ENCODE measurements at regions of chr11 and their contacts with region 1.

Region 1: GRCh38 chr11:78061088-78061921 is 2.4 kb upstream of the THRSP start:
- DNase-seq: peak; percentile 64
- ATAC-seq: peak; percentile 78
- H3K4me3 ChIP-seq: peak overlapping the region; percentile 2 to 48 (median 36); a peak in 4 of 6 replicates
- H3K27ac ChIP-seq: peak overlapping the region; percentile 87
- H3K4me1 ChIP-seq: peaks cover 53% of the 10 kb centered on the region
- H3K27me3 ChIP-seq: no peaks in the 10 kb centered on the region
- CTCF ChIP-seq: no peak
- EP300 ChIP-seq: peak in 1 of 2 experiments; percentile 28; a peak in 1 of 4 replicates
- POLR2A ChIP-seq: no peak
- RAD21 ChIP-seq: no peak

Region 2: GRCh38 chr11:78050964-78051831 is 10.1 kb before region 1 on chr11:
- CTCF ChIA-PET with region 1: no interaction called
- POLR2A ChIA-PET with region 1: interaction called, 23 read pairs
- in situ Hi-C with region 1: no loop called
- intact Hi-C with region 1: no loop called
- DNase-seq: peak; percentile 65
- ATAC-seq: peak; percentile 41
- H3K4me3 ChIP-seq: peak overlapping the region in 2 of 3 experiments; percentile 7 to 46; a peak in 2 of 6 replicates
- H3K27ac ChIP-seq: peak overlapping the region; percentile 78
- H3K4me1 ChIP-seq: peaks cover 70% of the 10 kb centered on the region
- H3K27me3 ChIP-seq: no peaks in the 10 kb centered on the region
- CTCF ChIP-seq: no peak
- EP300 ChIP-seq: peak in 1 of 2 experiments; percentile 60; a peak in 1 of 4 replicates
- POLR2A ChIP-seq: peak in 1 of 2 experiments; percentile 68; a peak in 2 of 4 replicates
- RAD21 ChIP-seq: no peak

Region 3: GRCh38 chr11:78085972-78086371 is 24.7 kb after region 1 on chr11:
- CTCF ChIA-PET with region 1: no interaction called
- POLR2A ChIA-PET with region 1: interaction called, 5 read pairs
- in situ Hi-C with region 1: no loop called
- intact Hi-C with region 1: loop called (anchors 1 kb)
- DNase-seq: peak; percentile 34
- ATAC-seq: no peak
- H3K4me3 ChIP-seq: no peak overlapping the region
- H3K27ac ChIP-seq: peak overlapping the region; percentile 73
- H3K4me1 ChIP-seq: peaks cover 68% of the 10 kb centered on the region
- H3K27me3 ChIP-seq: no peaks in the 10 kb centered on the region
- CTCF ChIP-seq: no peak
- EP300 ChIP-seq: no peak
- POLR2A ChIP-seq: no peak
- RAD21 ChIP-seq: no peak

Region 4: DNA sequence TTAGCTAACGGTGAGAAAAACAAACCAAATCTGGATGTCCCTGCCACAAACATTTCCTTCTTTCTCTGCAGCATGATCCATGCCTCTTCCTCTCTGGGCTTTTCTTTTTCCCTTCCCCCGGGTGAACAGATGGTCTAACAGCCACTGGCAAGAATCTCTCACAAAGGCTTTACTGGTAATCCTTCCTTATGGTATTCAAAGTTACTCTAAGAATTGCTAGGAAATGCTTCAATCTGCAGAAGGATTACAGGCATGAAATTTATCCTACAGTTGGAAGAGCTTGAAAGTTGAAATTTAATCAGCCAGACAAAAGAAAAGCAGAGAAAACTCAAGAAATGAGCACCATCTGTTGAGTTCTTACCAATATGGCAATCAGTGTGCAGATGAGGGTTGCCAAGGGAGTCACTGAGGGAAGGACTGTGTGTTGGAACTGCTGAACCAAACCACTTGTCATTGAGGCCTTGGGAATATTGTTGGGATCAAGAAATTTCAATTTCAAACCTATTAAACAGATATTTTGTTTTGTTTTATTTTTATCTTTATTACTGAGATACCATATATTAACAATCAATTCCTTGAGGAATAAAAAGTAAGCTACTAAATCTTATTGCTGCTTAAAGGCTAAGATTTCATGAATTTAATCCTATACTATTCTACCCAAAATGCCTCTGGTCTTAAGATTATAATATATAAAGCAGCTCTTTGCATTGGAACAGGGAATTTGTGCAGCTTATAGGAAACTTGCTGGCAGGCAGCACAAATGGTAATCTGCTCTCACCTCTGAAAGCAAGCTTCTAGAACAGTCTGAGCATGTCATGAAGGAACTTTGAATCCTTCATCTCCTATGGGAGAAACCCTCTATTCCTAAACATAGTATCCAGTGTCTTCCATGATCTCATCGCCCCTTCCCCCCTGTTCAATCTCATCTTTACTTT is 48.0 kb after region 1 on chr11:
- CTCF ChIA-PET with region 1: no interaction called
- POLR2A ChIA-PET with region 1: no interaction called
- in situ Hi-C with region 1: no loop called
- intact Hi-C with region 1: no loop called
- DNase-seq: no peak
- ATAC-seq: no peak
- H3K4me3 ChIP-seq: no peak overlapping the region
- H3K27ac ChIP-seq: no peak overlapping the region
- H3K4me1 ChIP-seq: no peaks in the 10 kb centered on the region
- H3K27me3 ChIP-seq: no peaks in the 10 kb centered on the region
- CTCF ChIP-seq: no peak
- EP300 ChIP-seq: no peak
- POLR2A ChIP-seq: no peak
- RAD21 ChIP-seq: no peak